ENCODE measurements at regions of chr9 and their contacts with region 1.

Region 1: GRCh38 chr9:116175614-116176013 is 22.0 kb downstream of the PAPPA start:
- DNase-seq: no peak

Region 2: GRCh38 chr9:116671605-116672004 is 496.0 kb after region 1 on chr9:
- intact Hi-C with region 1: no loop called
- DNase-seq: no peak

Region 3: GRCh38 chr9:117156771-117157535 is 981.3 kb after region 1 on chr9:
- intact Hi-C with region 1: loop called in 1 of 2 experiments (anchors 5 kb)
- DNase-seq: no peak